ENCODE measurements at regions of chr6 and their contacts with region 1.

Region 1: DNA sequence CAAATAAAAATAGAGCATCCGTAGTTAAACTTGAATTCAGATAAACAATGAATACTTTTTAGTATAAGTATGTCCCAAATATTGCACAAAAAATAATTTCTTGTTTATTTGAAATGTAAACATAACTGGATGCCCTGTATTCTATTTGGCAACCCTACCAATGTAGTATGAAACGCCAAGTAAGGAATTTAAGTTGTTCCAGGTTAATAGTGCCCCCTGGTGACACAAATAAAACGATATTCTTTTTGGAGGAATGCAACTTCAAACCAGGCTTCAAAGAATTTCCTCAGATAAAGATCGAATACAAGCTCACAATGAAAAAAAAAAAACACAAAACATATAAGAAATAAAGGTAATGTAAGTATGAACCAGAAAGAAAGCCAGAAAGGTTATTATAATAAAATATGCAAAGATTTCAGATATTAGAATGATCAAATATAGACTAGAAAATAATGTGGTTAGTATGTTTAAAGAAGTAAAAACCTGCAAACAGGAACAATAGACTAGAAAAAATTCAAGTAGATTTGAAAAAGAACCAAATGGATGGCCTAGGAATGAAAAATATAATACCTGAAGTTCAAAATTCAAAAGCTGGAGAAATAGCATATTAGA is 18.4 kb upstream of the AKAP7 start:
- DNase-seq: no peak
- H3K4me3 Mint-ChIP-seq: no peak overlapping the region
- H3K27ac Mint-ChIP-seq: no peak overlapping the region
- H3K4me1 Mint-ChIP-seq: no peaks in the 10 kb centered on the region
- H3K27me3 Mint-ChIP-seq: no peaks in the 10 kb centered on the region

Region 2: DNA sequence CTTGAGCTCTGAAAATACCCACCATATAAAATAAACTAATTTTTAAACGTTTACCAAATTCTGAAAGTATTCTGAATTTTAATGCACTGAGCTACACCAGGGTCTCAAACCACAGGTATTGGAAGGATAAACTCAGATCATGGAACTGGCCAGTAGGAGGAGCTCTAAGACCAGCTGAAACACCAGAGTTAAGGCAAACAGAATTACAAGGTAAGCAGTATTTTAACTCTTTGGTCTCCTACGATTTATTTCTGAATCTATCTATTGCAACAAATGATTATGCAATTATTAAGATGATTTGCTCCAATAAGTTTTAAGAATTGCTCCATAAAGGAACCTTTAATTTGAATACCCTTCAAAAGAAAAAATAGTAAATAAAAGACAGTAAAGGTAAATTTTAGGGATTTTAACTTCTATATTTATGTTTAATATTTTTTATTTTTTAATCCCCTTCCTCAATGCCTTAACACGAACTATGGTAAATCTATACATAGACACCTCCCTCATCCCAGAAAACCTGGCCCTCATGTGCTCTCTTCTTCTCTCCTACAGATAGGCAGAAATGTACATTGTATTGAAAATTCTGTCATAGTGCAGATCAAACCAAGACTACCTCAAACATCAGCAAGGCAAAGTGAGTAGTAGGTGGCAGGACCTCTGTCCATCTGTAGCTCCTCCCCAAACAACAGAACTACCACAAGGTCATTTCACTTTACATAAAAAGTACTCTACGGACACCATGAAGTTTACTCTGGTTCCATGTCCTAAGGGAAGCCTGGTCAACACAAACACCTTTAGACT is 231.3 kb before region 1 on chr6:
- CTCF ChIA-PET with region 1: interaction called, 57 read pairs
- DNase-seq: peak; percentile 82
- H3K4me3 Mint-ChIP-seq: no peak overlapping the region
- H3K27ac Mint-ChIP-seq: no peak overlapping the region
- H3K4me1 Mint-ChIP-seq: no peaks in the 10 kb centered on the region
- H3K27me3 Mint-ChIP-seq: no peaks in the 10 kb centered on the region

Region 3: GRCh38 chr6:131317516-131317915 is 200.7 kb after region 1 on chr6:
- CTCF ChIA-PET with region 1: no interaction called
- DNase-seq: no peak
- H3K4me3 Mint-ChIP-seq: no peak overlapping the region
- H3K27ac Mint-ChIP-seq: no peak overlapping the region
- H3K4me1 Mint-ChIP-seq: peaks cover 4% of the 10 kb centered on the region
- H3K27me3 Mint-ChIP-seq: no peaks in the 10 kb centered on the region

Measured in activated naive CD4-positive, alpha-beta T cell treated with anti-CD3 and anti-CD28 coated beads, Interleukin-2, amount 10 ng/mL, durations not matched to agents 7 days and 5 days (primary cell).